CD8-positive, alpha-beta memory T cell (primary cell): ENCODE measurements at regions of chrX and their contacts with region 1.

Region 1: DNA sequence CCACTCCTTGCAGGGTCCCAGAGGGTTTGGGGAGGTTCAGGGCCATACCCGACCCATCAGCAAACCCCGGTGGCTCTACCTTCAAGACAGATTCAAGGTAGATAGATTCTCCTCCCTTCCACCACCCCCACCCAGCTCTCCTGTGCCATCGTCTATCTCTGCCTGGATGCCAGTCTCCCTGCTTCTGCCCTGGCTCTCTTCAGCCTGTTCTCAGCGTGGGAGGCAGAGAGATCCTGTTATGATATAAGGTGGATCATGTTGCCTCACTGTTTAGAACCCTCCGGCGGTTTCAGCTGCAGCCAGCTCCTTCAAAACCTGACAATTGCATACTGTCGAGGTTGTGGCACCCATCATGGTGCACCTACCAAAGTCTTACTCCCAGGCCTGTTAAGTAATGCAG is 5.4 kb downstream of the LAGE3 start:
- DNase-seq: no peak
- H3K4me3 ChIP-seq: no peak overlapping the region
- H3K4me3 Mint-ChIP-seq: no peak overlapping the region
- H3K27ac ChIP-seq: no peak overlapping the region
- H3K27ac Mint-ChIP-seq: peak overlapping the region in 4 of 8 donors; percentile 15 to 72 (median 57)
- H3K4me1 ChIP-seq: peaks cover 13% of the 10 kb centered on the region
- H3K4me1 Mint-ChIP-seq: peaks cover 0 to 4% (median 3%) of the 10 kb centered on the region in 3 donors
- H3K27me3 ChIP-seq: no peaks in the 10 kb centered on the region
- H3K27me3 Mint-ChIP-seq: peaks cover 0 to 9% of the 10 kb centered on the region in 2 donors

Region 2: DNA sequence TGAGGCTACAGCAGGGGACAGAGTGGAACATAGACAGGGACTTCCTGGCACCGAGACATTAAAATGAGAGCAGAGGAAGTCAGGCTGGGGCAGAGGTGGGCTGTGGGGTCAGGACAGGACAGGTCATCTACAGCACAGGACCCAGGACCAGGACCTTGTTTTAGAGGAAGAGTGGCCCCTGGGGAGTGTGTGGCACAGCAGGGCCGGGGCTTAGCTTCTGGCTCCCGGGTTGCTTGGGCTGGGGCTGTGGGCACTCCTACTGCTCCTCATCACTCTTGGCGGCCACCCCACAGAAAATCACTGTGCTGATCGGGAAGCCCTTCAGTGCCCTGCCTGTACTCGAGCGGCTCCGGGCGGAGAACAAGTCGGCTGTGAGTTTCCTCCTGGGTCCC is 53.4 kb before region 1 on chrX:
- CTCF ChIA-PET with region 1: no interaction called
- POLR2A ChIA-PET with region 1: interaction called, 10 read pairs
- DNase-seq: no peak
- H3K4me3 ChIP-seq: no peak overlapping the region
- H3K4me3 Mint-ChIP-seq: no peak overlapping the region
- H3K27ac ChIP-seq: no peak overlapping the region
- H3K27ac Mint-ChIP-seq: no peak overlapping the region
- H3K4me1 ChIP-seq: no peaks in the 10 kb centered on the region
- H3K4me1 Mint-ChIP-seq: no peaks in the 10 kb centered on the region
- H3K27me3 ChIP-seq: no peaks in the 10 kb centered on the region
- H3K27me3 Mint-ChIP-seq: peaks cover 0 to 2% of the 10 kb centered on the region in 2 donors